Gastrocnemius medialis (tissue), 4 donors: ENCODE measurements at regions of chr1 and their contacts with region 1.

Region 1: GRCh38 chr1:155591770-155592169 is 18.2 kb upstream of the MSTO1 start:
- DNase-seq: no peak
- ATAC-seq: peak; percentile 63 to 74
- H3K4me3 ChIP-seq: no peak overlapping the region
- H3K27ac ChIP-seq: no peak overlapping the region
- H3K4me1 ChIP-seq: no peaks in the 10 kb centered on the region
- H3K27me3 ChIP-seq: no peaks in the 10 kb centered on the region
- CTCF ChIP-seq: peak; percentile 27 to 62 (median 43)
- POLR2A ChIP-seq: no peak

Region 2: DNA sequence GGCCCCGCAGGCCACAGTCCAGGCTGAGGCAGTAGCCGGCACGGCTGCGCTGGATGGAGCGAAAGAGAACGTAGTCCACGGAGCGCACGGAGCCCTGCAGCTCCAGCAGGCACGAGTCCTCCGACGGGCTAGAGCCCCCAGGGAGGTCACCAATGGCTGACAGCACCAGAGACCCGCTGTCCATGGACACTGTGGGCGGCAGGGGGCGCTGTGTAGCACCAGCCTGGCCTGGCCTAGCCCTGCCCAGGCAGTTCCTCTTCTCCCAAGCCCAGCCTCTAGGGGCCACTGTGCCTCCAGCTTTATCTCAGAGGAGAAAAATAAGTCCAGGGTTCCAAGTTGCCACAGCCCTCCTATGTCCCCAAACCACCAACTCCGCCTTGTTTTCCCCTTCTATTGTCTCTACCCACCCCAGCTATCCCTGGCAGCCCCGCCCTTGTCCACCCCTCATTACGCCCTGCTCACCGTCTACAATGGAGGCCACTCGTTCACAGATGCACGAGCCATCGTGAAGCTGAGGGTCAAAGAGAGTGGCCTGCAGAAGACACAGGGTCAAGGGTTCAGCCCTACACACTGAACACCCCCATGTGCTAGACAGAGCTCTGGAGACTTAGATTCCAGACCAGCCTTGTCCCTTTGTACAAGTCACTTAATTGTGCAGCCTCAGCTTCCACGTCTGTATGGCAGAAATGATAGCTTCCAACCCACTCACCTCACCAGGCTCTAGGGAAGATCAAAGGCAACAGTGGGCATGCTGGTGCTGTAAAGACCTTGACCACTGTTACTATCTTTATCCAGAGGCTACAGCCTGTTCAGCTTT is 340.9 kb before region 1 on chr1:
- in situ Hi-C with region 1: no loop called
- intact Hi-C with region 1: loop called (anchors 1 kb)
- DNase-seq: peak; percentile 81 to 88
- ATAC-seq: peak; percentile 69 to 82
- H3K4me3 ChIP-seq: peak overlapping the region in 1 of 4 donors; percentile 16
- H3K27ac ChIP-seq: peak overlapping the region in 2 of 4 donors; percentile 36 to 43
- H3K4me1 ChIP-seq: peaks cover 13 to 27% of the 10 kb centered on the region in 2 donors
- H3K27me3 ChIP-seq: no peaks in the 10 kb centered on the region
- CTCF ChIP-seq: peak; percentile 98 to 100 (median 99)
- POLR2A ChIP-seq: no peak

Region 3: GRCh38 chr1:155410931-155411330 is 180.8 kb before region 1 on chr1:
- in situ Hi-C with region 1: no loop called
- intact Hi-C with region 1: loop called (anchors 5 kb)
- DNase-seq: no peak
- ATAC-seq: no peak
- H3K4me3 ChIP-seq: no peak overlapping the region
- H3K27ac ChIP-seq: no peak overlapping the region
- H3K4me1 ChIP-seq: no peaks in the 10 kb centered on the region
- H3K27me3 ChIP-seq: no peaks in the 10 kb centered on the region
- CTCF ChIP-seq: no peak
- POLR2A ChIP-seq: no peak

Region 4: DNA sequence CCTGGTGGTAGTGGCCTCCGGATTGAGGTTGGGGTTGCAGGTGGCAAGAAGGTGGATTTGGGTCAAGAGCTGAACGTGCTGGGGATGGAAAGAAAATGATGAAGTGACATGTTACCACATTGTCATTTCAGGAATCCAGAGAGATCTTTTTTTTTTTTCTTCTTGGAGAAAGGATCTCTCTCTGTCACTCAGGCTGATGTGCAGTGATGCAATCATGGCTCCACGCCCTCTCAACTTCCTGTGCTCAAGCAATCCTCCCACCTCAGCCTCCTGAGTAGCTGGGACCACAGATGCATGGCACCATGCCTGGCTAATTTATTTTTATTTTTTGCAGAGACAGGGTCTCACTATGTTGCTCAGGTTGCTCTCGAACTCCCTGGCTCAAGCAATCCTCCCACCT is 184.6 kb after region 1 on chr1:
- in situ Hi-C with region 1: no loop called
- intact Hi-C with region 1: no loop called
- DNase-seq: peak in 1 of 2 donors; percentile 37
- ATAC-seq: no peak
- H3K4me3 ChIP-seq: no peak overlapping the region
- H3K27ac ChIP-seq: no peak overlapping the region
- H3K4me1 ChIP-seq: no peaks in the 10 kb centered on the region
- H3K27me3 ChIP-seq: no peaks in the 10 kb centered on the region
- CTCF ChIP-seq: no peak
- POLR2A ChIP-seq: no peak